CD8-positive, alpha-beta T cell (primary cell): ENCODE measurements at regions of chr6 and their contacts with region 1.

Region 1: GRCh38 chr6:5471044-5471443 is 209.7 kb downstream of the FARS2 start:
- DNase-seq: peak; percentile 34 to 77 (median 64)
- ATAC-seq: peak; percentile 62
- H3K4me3 ChIP-seq: no peak overlapping the region
- H3K4me3 Mint-ChIP-seq: no peak overlapping the region
- H3K27ac ChIP-seq: no peak overlapping the region
- H3K27ac Mint-ChIP-seq: no peak overlapping the region
- H3K4me1 ChIP-seq: peaks cover 6% of the 10 kb centered on the region
- H3K4me1 Mint-ChIP-seq: peaks cover 4% of the 10 kb centered on the region
- H3K27me3 ChIP-seq: no peaks in the 10 kb centered on the region
- H3K27me3 Mint-ChIP-seq: no peaks in the 10 kb centered on the region
- CTCF ChIP-seq: peak; percentile 76

Region 2: DNA sequence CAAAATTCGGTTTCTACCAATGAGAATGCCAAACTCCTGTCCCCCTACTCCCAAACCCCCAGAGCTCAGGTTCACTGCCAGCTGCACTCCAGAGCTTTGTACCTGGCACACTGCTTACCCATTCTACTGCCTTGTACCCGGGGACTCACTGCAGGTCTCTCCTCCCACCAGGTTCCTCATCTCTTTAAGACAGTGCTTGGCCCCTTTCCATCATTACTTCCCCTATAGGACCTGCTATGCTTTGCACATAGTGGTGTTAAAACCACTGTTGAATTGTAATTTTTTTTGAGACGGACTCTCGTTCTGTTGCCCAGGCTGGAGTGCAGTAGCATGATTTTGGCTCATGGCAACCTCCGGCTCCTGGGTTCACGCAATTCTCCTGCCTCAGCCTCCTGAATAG is 236.2 kb before region 1 on chr6:
- CTCF ChIA-PET with region 1: no interaction called
- POLR2A ChIA-PET with region 1: no interaction called
- intact Hi-C with region 1: no loop called
- DNase-seq: no peak
- ATAC-seq: no peak
- H3K4me3 ChIP-seq: no peak overlapping the region
- H3K4me3 Mint-ChIP-seq: no peak overlapping the region
- H3K27ac ChIP-seq: no peak overlapping the region
- H3K27ac Mint-ChIP-seq: no peak overlapping the region
- H3K4me1 ChIP-seq: no peaks in the 10 kb centered on the region
- H3K4me1 Mint-ChIP-seq: no peaks in the 10 kb centered on the region
- H3K27me3 ChIP-seq: no peaks in the 10 kb centered on the region
- H3K27me3 Mint-ChIP-seq: no peaks in the 10 kb centered on the region
- CTCF ChIP-seq: no peak

Region 3: DNA sequence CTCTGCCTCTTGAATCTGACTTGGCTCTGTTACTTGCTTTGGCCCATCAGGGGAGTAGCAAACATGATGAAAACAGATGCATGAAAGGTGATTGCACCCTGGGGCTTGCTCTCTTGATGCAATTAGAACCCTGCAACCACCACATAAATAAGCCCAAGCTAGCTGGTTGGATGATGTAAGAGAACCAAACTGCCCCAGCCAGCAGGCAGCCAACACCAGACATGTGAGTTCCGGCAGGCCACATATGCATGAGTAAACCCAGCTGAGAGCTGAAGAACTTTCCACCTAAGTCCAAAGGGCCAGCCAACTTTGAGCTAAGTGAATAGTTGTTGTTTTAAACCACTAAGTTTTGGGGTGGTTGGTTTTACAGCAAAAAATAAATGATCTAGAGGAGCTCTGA is 58.7 kb after region 1 on chr6:
- CTCF ChIA-PET with region 1: no interaction called
- POLR2A ChIA-PET with region 1: no interaction called
- intact Hi-C with region 1: no loop called
- DNase-seq: no peak
- ATAC-seq: no peak
- H3K4me3 ChIP-seq: no peak overlapping the region
- H3K4me3 Mint-ChIP-seq: no peak overlapping the region
- H3K27ac ChIP-seq: no peak overlapping the region
- H3K27ac Mint-ChIP-seq: no peak overlapping the region
- H3K4me1 ChIP-seq: no peaks in the 10 kb centered on the region
- H3K4me1 Mint-ChIP-seq: peaks cover 10% of the 10 kb centered on the region
- H3K27me3 ChIP-seq: no peaks in the 10 kb centered on the region
- H3K27me3 Mint-ChIP-seq: no peaks in the 10 kb centered on the region
- CTCF ChIP-seq: no peak

Region 4: DNA sequence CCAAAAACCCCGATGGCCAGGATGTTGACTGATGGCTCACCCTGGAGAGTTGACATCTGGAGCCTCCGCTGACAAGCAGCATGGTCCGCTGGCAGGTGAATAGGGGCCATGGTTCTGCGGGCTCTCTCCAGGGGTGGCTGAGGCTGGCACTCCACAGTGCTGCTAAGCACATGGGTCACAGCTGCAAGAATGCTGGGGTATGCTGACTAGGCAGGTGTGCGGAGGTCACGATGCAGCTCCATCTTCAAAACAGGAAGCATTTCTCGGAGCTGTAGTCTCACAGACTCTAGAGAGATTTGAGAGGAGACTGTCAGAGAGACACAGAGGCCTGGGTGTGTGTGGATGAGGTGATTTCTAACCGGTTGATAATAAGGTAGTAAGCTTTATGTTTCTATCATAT is 194.1 kb after region 1 on chr6:
- CTCF ChIA-PET with region 1: interaction called, 9 read pairs
- POLR2A ChIA-PET with region 1: interaction called, 4 read pairs
- intact Hi-C with region 1: loop called (anchors 2 to 5 kb)
- DNase-seq: peak in 8 of 9 experiments; percentile 9 to 72 (median 34)
- ATAC-seq: peak; percentile 72
- H3K4me3 ChIP-seq: no peak overlapping the region
- H3K4me3 Mint-ChIP-seq: peak overlapping the region; percentile 71
- H3K27ac ChIP-seq: no peak overlapping the region
- H3K27ac Mint-ChIP-seq: peak overlapping the region; percentile 94
- H3K4me1 ChIP-seq: peaks cover 64% of the 10 kb centered on the region
- H3K4me1 Mint-ChIP-seq: peaks cover 75% of the 10 kb centered on the region
- H3K27me3 ChIP-seq: no peaks in the 10 kb centered on the region
- H3K27me3 Mint-ChIP-seq: no peaks in the 10 kb centered on the region
- CTCF ChIP-seq: no peak

Region 5: GRCh38 chr6:5766260-5766659 is 295.2 kb after region 1 on chr6:
- CTCF ChIA-PET with region 1: interaction called, 3 read pairs
- POLR2A ChIA-PET with region 1: no interaction called
- intact Hi-C with region 1: loop called (anchors 1 to 5 kb)
- DNase-seq: peak in 1 of 9 experiments; percentile 41
- ATAC-seq: no peak
- H3K4me3 ChIP-seq: no peak overlapping the region
- H3K4me3 Mint-ChIP-seq: no peak overlapping the region
- H3K27ac ChIP-seq: no peak overlapping the region
- H3K27ac Mint-ChIP-seq: no peak overlapping the region
- H3K4me1 ChIP-seq: no peaks in the 10 kb centered on the region
- H3K4me1 Mint-ChIP-seq: peaks cover 16% of the 10 kb centered on the region
- H3K27me3 ChIP-seq: no peaks in the 10 kb centered on the region
- H3K27me3 Mint-ChIP-seq: no peaks in the 10 kb centered on the region
- CTCF ChIP-seq: no peak

Region 6: GRCh38 chr6:5995949-5996713 is 525.1 kb after region 1 on chr6:
- CTCF ChIA-PET with region 1: interaction called, 10 read pairs
- POLR2A ChIA-PET with region 1: no interaction called
- intact Hi-C with region 1: loop called in 1 of 2 experiments (anchors 10 kb)
- DNase-seq: peak in 2 of 9 experiments; percentile 21 to 35
- ATAC-seq: peak; percentile 22
- H3K4me3 ChIP-seq: peak overlapping the region; percentile 52 to 59
- H3K4me3 Mint-ChIP-seq: peak overlapping the region; percentile 92
- H3K27ac ChIP-seq: no peak overlapping the region
- H3K27ac Mint-ChIP-seq: no peak overlapping the region
- H3K4me1 ChIP-seq: peaks cover 52% of the 10 kb centered on the region
- H3K4me1 Mint-ChIP-seq: peaks cover 51% of the 10 kb centered on the region
- H3K27me3 ChIP-seq: peaks cover 69 to 77% of the 10 kb centered on the region in 2 experiments
- H3K27me3 Mint-ChIP-seq: peaks cover 75% of the 10 kb centered on the region
- CTCF ChIP-seq: no peak

Region 7: GRCh38 chr6:6008648-6009421 is 537.8 kb after region 1 on chr6:
- CTCF ChIA-PET with region 1: no interaction called
- POLR2A ChIA-PET with region 1: interaction called, 3 read pairs
- intact Hi-C with region 1: loop called in 1 of 2 experiments (anchors 10 kb)
- DNase-seq: peak in 4 of 9 experiments; percentile 29 to 64 (median 46)
- ATAC-seq: peak; percentile 47
- H3K4me3 ChIP-seq: peak overlapping the region; percentile 44 to 47
- H3K4me3 Mint-ChIP-seq: peak overlapping the region; percentile 64
- H3K27ac ChIP-seq: no peak overlapping the region
- H3K27ac Mint-ChIP-seq: no peak overlapping the region
- H3K4me1 ChIP-seq: peaks cover 39% of the 10 kb centered on the region
- H3K4me1 Mint-ChIP-seq: peaks cover 37% of the 10 kb centered on the region
- H3K27me3 ChIP-seq: peaks cover 45 to 46% of the 10 kb centered on the region in 2 experiments
- H3K27me3 Mint-ChIP-seq: peaks cover 70% of the 10 kb centered on the region
- CTCF ChIP-seq: no peak

Region 8: GRCh38 chr6:6131492-6132109 is 660.6 kb after region 1 on chr6:
- CTCF ChIA-PET with region 1: no interaction called
- POLR2A ChIA-PET with region 1: no interaction called
- intact Hi-C with region 1: loop called in 1 of 2 experiments (anchors 5 kb)
- DNase-seq: peak in 2 of 9 experiments; percentile 30 to 45
- ATAC-seq: no peak
- H3K4me3 ChIP-seq: no peak overlapping the region
- H3K4me3 Mint-ChIP-seq: no peak overlapping the region
- H3K27ac ChIP-seq: no peak overlapping the region
- H3K27ac Mint-ChIP-seq: no peak overlapping the region
- H3K4me1 ChIP-seq: no peaks in the 10 kb centered on the region
- H3K4me1 Mint-ChIP-seq: no peaks in the 10 kb centered on the region
- H3K27me3 ChIP-seq: no peaks in the 10 kb centered on the region
- H3K27me3 Mint-ChIP-seq: peaks cover 5% of the 10 kb centered on the region
- CTCF ChIP-seq: peak; percentile 18

Region 9: DNA sequence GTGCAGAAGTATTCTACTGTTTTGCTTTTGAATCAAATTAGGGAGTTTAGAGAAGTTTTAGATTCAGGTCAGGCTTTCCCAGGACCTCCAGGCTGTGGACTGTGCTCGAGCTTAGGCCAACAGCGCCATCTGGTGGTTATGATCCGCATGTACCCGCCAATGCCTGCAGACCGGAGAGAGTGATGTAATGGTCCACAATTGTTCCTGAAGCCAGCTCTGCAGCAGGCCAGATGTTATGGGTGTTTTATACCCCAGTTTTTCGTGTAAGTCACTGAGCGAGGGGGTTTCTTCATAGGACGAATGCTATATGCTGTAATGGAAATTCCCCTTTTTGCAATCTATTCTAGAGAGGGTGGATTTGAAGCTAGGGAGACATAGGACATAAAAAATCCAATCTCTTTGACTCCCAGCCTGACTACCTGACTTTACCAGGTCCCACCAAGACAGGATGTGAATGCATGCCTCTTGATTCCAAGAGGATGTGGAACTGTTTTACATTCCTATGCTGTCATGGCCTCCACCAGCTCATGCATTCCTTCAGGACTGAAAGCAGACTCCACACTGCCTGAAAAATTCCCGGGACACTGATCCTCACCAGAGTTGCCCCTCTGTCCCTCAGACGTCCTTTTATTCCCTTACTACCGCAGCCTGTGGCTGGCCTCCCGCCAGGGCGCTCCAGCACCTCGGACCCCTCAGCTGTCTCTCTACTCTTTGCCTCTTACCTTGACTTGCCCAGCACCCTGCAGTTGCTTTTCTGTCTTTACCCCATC is 1076.3 kb after region 1 on chr6:
- CTCF ChIA-PET with region 1: interaction called, 17 read pairs
- POLR2A ChIA-PET with region 1: no interaction called
- intact Hi-C with region 1: loop called (anchors 1 kb)
- DNase-seq: peak; percentile 67 to 91 (median 82)
- ATAC-seq: peak; percentile 90
- H3K4me3 ChIP-seq: peak overlapping the region; percentile 42 to 48
- H3K4me3 Mint-ChIP-seq: peak overlapping the region; percentile 76
- H3K27ac ChIP-seq: no peak overlapping the region
- H3K27ac Mint-ChIP-seq: no peak overlapping the region
- H3K4me1 ChIP-seq: peaks cover 9% of the 10 kb centered on the region
- H3K4me1 Mint-ChIP-seq: peaks cover 3% of the 10 kb centered on the region
- H3K27me3 ChIP-seq: peaks cover 6 to 13% of the 10 kb centered on the region in 2 experiments
- H3K27me3 Mint-ChIP-seq: peaks cover 32% of the 10 kb centered on the region
- CTCF ChIP-seq: peak; percentile 95